ENCODE measurements at regions of chr13 and their contacts with region 1.

Region 1: GRCh38 chr13:24270639-24271141 is 38.7 kb upstream of the C1QTNF9 start:
- DNase-seq: peak; percentile 54
- H3K4me3 Mint-ChIP-seq: peak overlapping the region; percentile 88
- H3K27ac Mint-ChIP-seq: peak overlapping the region; percentile 93
- H3K4me1 Mint-ChIP-seq: peaks cover 82% of the 10 kb centered on the region
- H3K27me3 Mint-ChIP-seq: no peaks in the 10 kb centered on the region

Region 2: GRCh38 chr13:23741879-23742510 is 528.7 kb before region 1 on chr13:
- intact Hi-C with region 1: loop called (anchors 2 kb)
- DNase-seq: no peak
- H3K4me3 Mint-ChIP-seq: no peak overlapping the region
- H3K27ac Mint-ChIP-seq: no peak overlapping the region
- H3K4me1 Mint-ChIP-seq: peaks cover 27% of the 10 kb centered on the region
- H3K27me3 Mint-ChIP-seq: peaks cover 10% of the 10 kb centered on the region

Region 3: GRCh38 chr13:24053519-24054251 is 217.0 kb before region 1 on chr13:
- intact Hi-C with region 1: loop called (anchors 2 kb)
- DNase-seq: peak; percentile 55
- H3K4me3 Mint-ChIP-seq: no peak overlapping the region
- H3K27ac Mint-ChIP-seq: no peak overlapping the region
- H3K4me1 Mint-ChIP-seq: peaks cover 20% of the 10 kb centered on the region
- H3K27me3 Mint-ChIP-seq: peaks cover 15% of the 10 kb centered on the region

Region 4: GRCh38 chr13:24168392-24168750 is 102.3 kb before region 1 on chr13:
- intact Hi-C with region 1: loop called (anchors 2 kb)
- DNase-seq: no peak
- H3K4me3 Mint-ChIP-seq: no peak overlapping the region
- H3K27ac Mint-ChIP-seq: peak overlapping the region; percentile 77
- H3K4me1 Mint-ChIP-seq: peaks cover 55% of the 10 kb centered on the region
- H3K27me3 Mint-ChIP-seq: peaks cover 4% of the 10 kb centered on the region

Region 5: GRCh38 chr13:24288870-24289269 is 18.2 kb after region 1 on chr13:
- intact Hi-C with region 1: no loop called
- DNase-seq: no peak
- H3K4me3 Mint-ChIP-seq: no peak overlapping the region
- H3K27ac Mint-ChIP-seq: no peak overlapping the region
- H3K4me1 Mint-ChIP-seq: no peaks in the 10 kb centered on the region
- H3K27me3 Mint-ChIP-seq: no peaks in the 10 kb centered on the region

Region 6: DNA sequence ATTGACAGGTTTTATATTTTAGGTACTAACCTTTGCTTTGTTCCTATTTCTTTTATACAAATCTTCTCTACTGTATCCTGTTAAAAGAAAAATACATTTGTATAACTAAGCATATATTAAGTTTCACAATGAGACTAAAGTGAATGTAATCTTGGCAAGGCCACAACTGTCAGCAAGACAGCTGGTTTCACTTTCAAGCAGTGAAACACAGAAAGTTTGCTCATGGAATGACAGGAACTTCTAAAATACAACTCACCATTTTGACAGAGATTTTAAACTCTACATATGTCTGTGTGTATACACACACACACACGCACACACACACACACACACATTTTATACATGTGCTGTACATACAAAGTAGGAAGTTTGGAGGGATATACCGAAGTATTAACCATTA is 188.5 kb after region 1 on chr13:
- intact Hi-C with region 1: loop called (anchors 5 kb)
- DNase-seq: no peak
- H3K4me3 Mint-ChIP-seq: no peak overlapping the region
- H3K27ac Mint-ChIP-seq: peak overlapping the region; percentile 50
- H3K4me1 Mint-ChIP-seq: peaks cover 37% of the 10 kb centered on the region
- H3K27me3 Mint-ChIP-seq: no peaks in the 10 kb centered on the region

Region 7: GRCh38 chr13:25286969-25287961 is 1016.6 kb after region 1 on chr13 and contains the start of gene MTMR6:
- intact Hi-C with region 1: loop called (anchors 10 kb)
- DNase-seq: peak; percentile 90
- H3K4me3 Mint-ChIP-seq: peak within 1 kb of the TSS; percentile 94
- H3K27ac Mint-ChIP-seq: peak within 1 kb of the TSS; percentile 93
- H3K4me1 Mint-ChIP-seq: peaks cover 41% of the 10 kb centered on the region
- H3K27me3 Mint-ChIP-seq: peaks cover 21% of the 10 kb centered on the region
- total RNA-seq, gene MTMR6: 17.0 and 17.9 TPM in 2 replicates

Measured in activated T-helper 1 cell treated with anti-CD3 and anti-CD28 coated beads, Interleukin-12 subunit alpha, Interleukin-12 subunit beta, Interleukin-2, Interleukin-4 antibody, amounts not matched to agents 30 ng/mL and 10 ng/mL and 1 ng/mL, durations not matched to agents 14 hours and 24 hours and 36 hours (primary cell).